PC-9 (cell line): ENCODE measurements at regions of chr1 and their contacts with region 1.

Region 1: GRCh38 chr1:28736450-28737306 is at the start of gene YTHDF2:
- DNase-seq: peak; percentile 73 to 95
- H3K4me3 ChIP-seq: peak within 1 kb of the TSS; percentile 82
- H3K27ac ChIP-seq: peak within 1 kb of the TSS; percentile 74
- H3K4me1 ChIP-seq: peaks cover 25% of the 10 kb centered on the region
- H3K27me3 ChIP-seq: no peaks in the 10 kb centered on the region
- CTCF ChIP-seq: peak; percentile 82
- total RNA-seq, gene YTHDF2: 46.4 and 63.4 TPM in 2 replicates

Region 2: DNA sequence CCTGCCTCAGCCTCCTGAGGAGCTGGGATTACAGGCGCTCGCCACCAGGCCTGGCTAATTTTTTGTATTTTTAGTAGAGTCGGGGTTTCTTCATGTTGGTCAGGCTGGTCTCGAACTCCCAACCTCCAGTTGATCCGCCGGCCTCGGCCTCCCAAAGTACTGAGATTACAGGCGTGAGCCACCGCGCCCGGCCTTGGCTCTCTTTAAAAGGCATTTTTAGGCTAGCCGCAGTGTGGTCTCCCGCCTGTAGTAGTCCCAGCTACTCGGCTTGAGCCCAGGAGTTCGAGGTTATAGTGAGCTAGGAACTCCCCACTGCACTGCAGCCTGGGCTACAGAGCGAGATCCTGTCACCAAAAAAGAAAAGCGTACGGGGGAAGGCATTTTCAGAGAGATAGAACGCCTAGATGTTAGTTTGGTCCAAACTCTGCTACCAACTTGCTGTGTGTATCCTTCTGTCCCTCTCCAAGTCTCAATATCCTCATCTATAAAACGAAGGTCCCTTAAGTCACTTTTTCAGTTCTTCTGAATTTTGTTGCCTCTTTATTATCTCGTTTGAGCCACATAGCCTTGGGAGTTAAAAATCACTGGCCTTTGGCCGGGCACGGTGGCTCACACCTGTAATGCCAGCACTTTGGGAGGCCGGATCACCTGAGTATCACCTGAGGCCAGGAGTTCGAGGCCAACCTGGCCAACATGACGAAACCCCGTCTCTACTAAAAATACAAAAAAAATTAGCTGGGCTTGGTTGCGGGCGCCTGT is 407.1 kb before region 1 on chr1:
- CTCF ChIA-PET with region 1: no interaction called
- POLR2A ChIA-PET with region 1: interaction called, 12 read pairs
- intact Hi-C with region 1: no loop called
- DNase-seq: no peak
- H3K4me3 ChIP-seq: peak overlapping the region; percentile 80
- H3K27ac ChIP-seq: peak overlapping the region; percentile 91
- H3K4me1 ChIP-seq: peaks cover 14% of the 10 kb centered on the region
- H3K27me3 ChIP-seq: no peaks in the 10 kb centered on the region
- CTCF ChIP-seq: no peak

Region 3: GRCh38 chr1:28631713-28632112 is 105.0 kb before region 1 on chr1:
- CTCF ChIA-PET with region 1: interaction called, 3 read pairs
- POLR2A ChIA-PET with region 1: interaction called, 23 read pairs
- intact Hi-C with region 1: no loop called
- DNase-seq: no peak
- H3K4me3 ChIP-seq: no peak overlapping the region
- H3K27ac ChIP-seq: no peak overlapping the region
- H3K4me1 ChIP-seq: no peaks in the 10 kb centered on the region
- H3K27me3 ChIP-seq: no peaks in the 10 kb centered on the region
- CTCF ChIP-seq: no peak

Region 4: GRCh38 chr1:28668191-28668955 is 68.3 kb before region 1 on chr1 and contains the start of gene GMEB1:
- CTCF ChIA-PET with region 1: interaction called, 7 read pairs
- POLR2A ChIA-PET with region 1: no interaction called
- intact Hi-C with region 1: loop called (anchors 2 kb)
- DNase-seq: peak; percentile 69 to 85
- H3K4me3 ChIP-seq: peak within 1 kb of the TSS; percentile 80
- H3K27ac ChIP-seq: peak within 1 kb of the TSS; percentile 75
- H3K4me1 ChIP-seq: no peaks in the 10 kb centered on the region
- H3K27me3 ChIP-seq: no peaks in the 10 kb centered on the region
- CTCF ChIP-seq: no peak
- total RNA-seq, gene GMEB1: 8.9 and 9.7 TPM in 2 replicates

Region 5: GRCh38 chr1:28775121-28775944 is 38.7 kb after region 1 on chr1:
- CTCF ChIA-PET with region 1: interaction called, 23 read pairs
- POLR2A ChIA-PET with region 1: interaction called, 14 read pairs
- intact Hi-C with region 1: no loop called
- DNase-seq: peak in 1 of 2 experiments; percentile 77
- H3K4me3 ChIP-seq: no peak overlapping the region
- H3K27ac ChIP-seq: no peak overlapping the region
- H3K4me1 ChIP-seq: no peaks in the 10 kb centered on the region
- H3K27me3 ChIP-seq: no peaks in the 10 kb centered on the region
- CTCF ChIP-seq: no peak

Region 6: DNA sequence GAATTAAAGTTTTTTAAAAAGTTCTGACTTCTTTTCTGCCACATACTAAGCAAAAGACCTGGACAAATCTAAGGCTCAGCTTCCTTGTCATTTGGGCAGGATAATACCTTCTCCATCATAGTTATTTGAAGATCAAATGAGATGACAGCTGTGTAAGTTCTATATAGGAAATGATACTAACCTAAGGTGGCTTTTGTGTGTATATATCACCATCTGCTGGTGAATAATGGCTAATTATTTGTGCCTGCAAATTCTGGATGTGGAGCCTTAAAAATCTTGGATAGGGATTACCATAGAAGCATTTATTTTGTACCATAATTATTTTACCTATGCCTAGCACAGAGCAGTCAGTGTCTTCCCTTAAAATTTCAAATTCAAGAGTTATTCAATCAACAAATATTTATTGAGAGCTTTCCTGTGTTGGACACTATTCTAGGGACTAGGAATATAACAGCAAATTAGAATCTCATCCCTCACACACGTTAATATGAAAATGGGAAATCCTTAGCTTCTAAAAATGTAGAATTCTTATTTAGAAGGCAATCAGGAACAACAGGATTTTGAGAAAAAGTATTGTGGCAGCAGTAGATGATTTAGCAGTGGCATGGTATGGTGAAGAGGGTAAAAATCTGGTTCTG is 297.3 kb after region 1 on chr1:
- CTCF ChIA-PET with region 1: interaction called, 7 read pairs
- POLR2A ChIA-PET with region 1: interaction called, 25 read pairs
- intact Hi-C with region 1: no loop called
- DNase-seq: peak in 1 of 2 experiments; percentile 40
- H3K4me3 ChIP-seq: no peak overlapping the region
- H3K27ac ChIP-seq: no peak overlapping the region
- H3K4me1 ChIP-seq: no peaks in the 10 kb centered on the region
- H3K27me3 ChIP-seq: no peaks in the 10 kb centered on the region
- CTCF ChIP-seq: peak; percentile 72